ENCODE measurements at regions of chr1 and their contacts with region 1.

Region 1: GRCh38 chr1:37514350-37515184 is at the start of gene MEAF6:
- H3K4me3 ChIP-seq: peak within 1 kb of the TSS; percentile 95
- H3K27ac ChIP-seq: peak within 1 kb of the TSS; percentile 88
- H3K4me1 ChIP-seq: no peaks in the 10 kb centered on the region
- CTCF ChIP-seq: peak; percentile 45

Region 2: GRCh38 chr1:37474046-37474759 is 40.4 kb before region 1 on chr1 and contains the start of gene ZC3H12A:
- CTCF ChIA-PET with region 1: interaction called, 8 read pairs
- POLR2A ChIA-PET with region 1: interaction called, 14 read pairs
- H3K4me3 ChIP-seq: peak within 1 kb of the TSS; percentile 71
- H3K27ac ChIP-seq: peak within 1 kb of the TSS; percentile 42; the same call in 1 of the 2 replicates
- H3K4me1 ChIP-seq: peaks cover 18% of the 10 kb centered on the region
- CTCF ChIP-seq: no peak

Region 3: DNA sequence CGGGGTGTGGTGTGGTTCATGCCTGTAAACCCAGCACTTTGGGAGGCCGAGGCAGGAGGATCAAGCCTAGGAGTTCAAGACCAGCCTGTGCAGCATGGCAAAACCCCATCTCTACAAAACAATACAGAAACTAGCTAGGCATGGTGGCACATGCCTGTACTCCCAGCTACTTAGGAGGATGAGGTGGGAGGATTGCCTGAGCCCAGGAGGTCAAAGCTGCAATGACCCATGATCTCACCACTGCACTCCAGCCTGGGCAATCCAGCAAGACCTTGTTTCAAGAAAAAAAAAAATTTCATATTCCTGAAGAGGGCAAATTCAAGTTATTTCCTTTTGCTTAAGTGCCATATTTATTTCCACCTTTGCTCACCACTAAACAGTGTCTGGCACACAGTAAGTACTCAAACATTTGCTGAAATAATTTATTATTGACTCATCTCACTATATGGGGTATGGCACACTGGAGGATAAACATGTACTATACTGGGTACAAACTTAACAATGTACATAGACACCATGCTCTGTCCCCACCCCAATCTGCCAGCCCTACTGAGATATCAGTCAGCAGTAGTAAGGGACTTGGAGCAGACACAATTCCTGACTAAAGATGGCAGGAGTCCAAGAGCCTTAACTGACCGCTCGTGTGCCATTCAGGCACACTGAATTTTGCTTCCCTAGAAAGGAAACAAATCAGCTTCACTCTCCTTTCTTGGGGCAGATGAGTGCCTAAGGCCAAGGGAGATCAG is 15.5 kb before region 1 on chr1:
- CTCF ChIA-PET with region 1: interaction called, 20 read pairs
- POLR2A ChIA-PET with region 1: interaction called, 5 read pairs
- H3K4me3 ChIP-seq: no peak overlapping the region
- H3K27ac ChIP-seq: no peak overlapping the region
- H3K4me1 ChIP-seq: 0 out of 2 replicates have a peak, but pooled peaks cover 3% of the 10 kb centered on the region
- CTCF ChIP-seq: no peak

Region 4: GRCh38 chr1:37553927-37554808 is 39.6 kb after region 1 on chr1 and contains the start of gene SNIP1:
- CTCF ChIA-PET with region 1: interaction called, 4 read pairs
- POLR2A ChIA-PET with region 1: interaction called, 11 read pairs
- H3K4me3 ChIP-seq: peak within 1 kb of the TSS; percentile 99
- H3K27ac ChIP-seq: no peak within 1 kb of the TSS; the same call in 1 of the 2 replicates
- H3K4me1 ChIP-seq: peaks cover 4% of the 10 kb centered on the region; the same call in 1 of the 2 replicates
- CTCF ChIP-seq: no peak

Region 5: DNA sequence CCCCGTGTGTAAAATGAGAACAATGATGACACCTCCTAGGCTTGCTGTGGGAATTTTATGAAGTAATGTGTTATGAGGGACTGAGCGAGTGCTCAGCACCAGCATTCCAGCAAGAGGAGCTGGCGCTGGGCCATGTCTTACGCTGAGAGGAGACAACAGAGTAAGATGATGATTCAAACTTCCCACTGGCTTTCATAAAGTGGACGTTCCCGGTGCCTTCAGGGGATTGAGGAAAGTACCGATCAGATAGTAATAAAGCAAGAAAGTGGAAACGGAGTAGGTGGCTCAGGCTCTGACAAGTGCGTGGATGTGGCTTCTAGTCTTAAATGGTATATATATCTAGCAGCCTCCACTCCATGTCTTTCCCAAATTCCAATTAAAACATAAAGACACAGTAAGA is 226.6 kb after region 1 on chr1:
- CTCF ChIA-PET with region 1: no interaction called
- POLR2A ChIA-PET with region 1: no interaction called
- H3K4me3 ChIP-seq: no peak overlapping the region
- H3K27ac ChIP-seq: no peak overlapping the region
- H3K4me1 ChIP-seq: 0 out of 2 replicates have a peak, but pooled peaks cover 3% of the 10 kb centered on the region
- CTCF ChIP-seq: no peak